Calu3 (cell line): ENCODE measurements at regions of chr17 and their contacts with region 1.

Region 1: GRCh38 chr17:9522074-9522473 is 53.5 kb downstream of the STX8 start:
- DNase-seq: peak; percentile 19
- H3K4me3 Mint-ChIP-seq: no peak overlapping the region
- H3K27ac Mint-ChIP-seq: no peak overlapping the region
- H3K4me1 Mint-ChIP-seq: no peaks in the 10 kb centered on the region
- H3K27me3 Mint-ChIP-seq: no peaks in the 10 kb centered on the region
- CTCF ChIP-seq: peak; percentile 18

Region 2: GRCh38 chr17:9402590-9403199 is 119.4 kb before region 1 on chr17:
- CTCF ChIA-PET with region 1: interaction called, 4 read pairs
- intact Hi-C with region 1: loop called (anchors 5 kb)
- DNase-seq: peak; percentile 43
- H3K4me3 Mint-ChIP-seq: no peak overlapping the region
- H3K27ac Mint-ChIP-seq: no peak overlapping the region
- H3K4me1 Mint-ChIP-seq: no peaks in the 10 kb centered on the region
- H3K27me3 Mint-ChIP-seq: no peaks in the 10 kb centered on the region
- CTCF ChIP-seq: peak; percentile 32